Mammary epithelial cell (primary cell): ENCODE measurements at regions of chr11 and their contacts with region 1.

Region 1: DNA sequence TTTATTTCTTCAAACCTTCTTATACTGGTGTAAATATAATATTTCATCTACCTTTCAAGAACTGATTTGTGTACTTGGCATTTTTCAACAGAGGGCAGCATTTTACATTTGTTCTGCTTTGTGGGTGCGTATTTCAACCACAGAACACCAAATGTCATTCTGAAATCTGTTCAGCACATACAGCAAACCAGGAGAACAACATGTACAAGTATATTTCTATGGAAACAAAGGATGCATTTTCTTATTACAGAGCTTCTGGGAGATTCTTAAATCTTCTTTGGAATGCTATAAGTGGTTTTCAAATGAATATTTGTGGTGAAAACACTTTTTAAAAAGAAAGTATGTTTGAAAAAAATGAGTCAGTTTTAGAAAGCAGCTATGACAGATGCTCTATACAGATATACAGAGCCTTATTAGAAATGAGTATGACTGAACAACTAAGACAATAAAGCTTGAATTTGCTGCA is 946.0 kb downstream of the FAM181B start:
- DNase-seq: peak; percentile 58
- H3K4me3 ChIP-seq: no peak overlapping the region
- H3K27ac ChIP-seq: no peak overlapping the region
- H3K4me1 ChIP-seq: no peaks in the 10 kb centered on the region
- H3K27me3 ChIP-seq: no peaks in the 10 kb centered on the region
- CTCF ChIP-seq: peak; percentile 31 to 53

Region 2: DNA sequence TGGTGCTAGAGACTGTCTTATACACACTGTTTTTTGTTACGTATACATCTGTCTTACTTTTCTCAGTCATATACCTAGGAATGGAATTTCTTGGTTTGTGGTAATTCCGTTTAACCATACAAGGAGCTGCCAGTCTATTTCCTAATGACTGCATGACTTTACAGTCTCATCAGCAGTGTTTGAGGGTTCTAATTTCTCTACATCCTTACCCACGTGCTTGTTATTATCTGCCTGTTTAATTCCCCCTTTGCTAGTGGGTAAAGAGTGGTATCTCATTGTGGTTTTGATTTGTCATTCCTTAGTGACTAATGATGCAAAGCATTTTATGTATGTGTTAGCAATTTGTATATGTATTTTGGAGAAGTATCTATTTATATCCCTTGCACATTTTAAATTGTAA is 61.9 kb before region 1 on chr11:
- CTCF ChIA-PET with region 1: no interaction called
- dilution Hi-C with region 1: loop called (anchors 5 kb)
- in situ Hi-C with region 1: no loop called
- intact Hi-C with region 1: no loop called
- DNase-seq: peak; percentile 19
- H3K4me3 ChIP-seq: no peak overlapping the region
- H3K27ac ChIP-seq: no peak overlapping the region
- H3K4me1 ChIP-seq: peaks cover 3% of the 10 kb centered on the region
- H3K27me3 ChIP-seq: no peaks in the 10 kb centered on the region
- CTCF ChIP-seq: no peak

Region 3: GRCh38 chr11:81744336-81745116 is 43.1 kb before region 1 on chr11:
- CTCF ChIA-PET with region 1: no interaction called
- dilution Hi-C with region 1: no loop called
- in situ Hi-C with region 1: no loop called
- intact Hi-C with region 1: no loop called
- DNase-seq: no peak
- H3K4me3 ChIP-seq: no peak overlapping the region
- H3K27ac ChIP-seq: no peak overlapping the region
- H3K4me1 ChIP-seq: no peaks in the 10 kb centered on the region
- H3K27me3 ChIP-seq: no peaks in the 10 kb centered on the region
- CTCF ChIP-seq: no peak

Region 4: DNA sequence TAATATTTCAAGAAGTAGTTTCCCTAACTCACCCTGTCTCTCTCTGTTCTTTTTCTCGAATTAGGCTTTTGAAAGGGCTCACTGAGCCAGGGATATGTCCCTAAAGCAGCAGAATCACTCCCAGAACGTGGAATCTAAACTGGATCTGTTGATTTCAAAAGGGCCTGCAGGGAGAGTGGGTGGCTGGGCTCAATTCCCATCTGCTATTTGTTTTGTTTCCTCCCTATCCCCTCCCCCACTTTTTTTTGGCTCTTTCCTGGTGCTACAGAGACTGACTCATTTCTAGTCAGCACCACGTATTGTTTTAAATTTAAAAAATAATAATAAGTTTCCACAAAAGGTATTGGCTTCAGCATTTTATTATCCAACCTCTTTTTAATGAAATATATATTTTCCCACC is 15.5 kb before region 1 on chr11:
- CTCF ChIA-PET with region 1: no interaction called
- dilution Hi-C with region 1: no loop called
- in situ Hi-C with region 1: no loop called
- intact Hi-C with region 1: no loop called
- DNase-seq: no peak
- H3K4me3 ChIP-seq: no peak overlapping the region
- H3K27ac ChIP-seq: no peak overlapping the region
- H3K4me1 ChIP-seq: no peaks in the 10 kb centered on the region
- H3K27me3 ChIP-seq: peaks cover 2% of the 10 kb centered on the region
- CTCF ChIP-seq: no peak

Region 5: DNA sequence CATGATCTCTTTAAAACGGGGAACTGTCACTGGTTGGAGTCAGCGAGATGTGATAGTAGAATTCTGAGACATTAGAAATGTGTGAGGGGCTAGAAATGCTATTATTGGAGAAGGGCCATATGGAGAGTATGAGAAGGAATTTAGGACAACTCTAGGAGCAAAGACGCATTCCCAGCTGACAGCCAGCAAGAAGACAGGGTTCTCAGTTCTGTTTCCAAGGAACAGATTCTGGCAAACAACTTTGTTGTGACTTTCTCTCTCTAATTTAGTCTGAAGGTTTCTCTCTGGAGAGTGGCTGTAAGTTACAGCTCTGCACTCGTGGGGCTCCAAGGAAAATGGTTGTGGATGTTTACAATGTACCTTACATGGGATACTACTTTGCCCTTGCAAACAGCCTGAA is 69.8 kb after region 1 on chr11:
- CTCF ChIA-PET with region 1: no interaction called
- dilution Hi-C with region 1: no loop called
- in situ Hi-C with region 1: no loop called
- intact Hi-C with region 1: loop called (anchors 10 kb)
- DNase-seq: no peak
- H3K4me3 ChIP-seq: no peak overlapping the region
- H3K27ac ChIP-seq: no peak overlapping the region
- H3K4me1 ChIP-seq: no peaks in the 10 kb centered on the region
- H3K27me3 ChIP-seq: no peaks in the 10 kb centered on the region
- CTCF ChIP-seq: no peak

Region 6: GRCh38 chr11:82038153-82038552 is 250.5 kb after region 1 on chr11:
- CTCF ChIA-PET with region 1: no interaction called
- dilution Hi-C with region 1: no loop called
- in situ Hi-C with region 1: no loop called
- intact Hi-C with region 1: loop called (anchors 1 kb)
- DNase-seq: no peak
- H3K4me3 ChIP-seq: no peak overlapping the region
- H3K27ac ChIP-seq: no peak overlapping the region
- H3K4me1 ChIP-seq: no peaks in the 10 kb centered on the region
- H3K27me3 ChIP-seq: no peaks in the 10 kb centered on the region
- CTCF ChIP-seq: peak; percentile 10 to 55

Region 7: DNA sequence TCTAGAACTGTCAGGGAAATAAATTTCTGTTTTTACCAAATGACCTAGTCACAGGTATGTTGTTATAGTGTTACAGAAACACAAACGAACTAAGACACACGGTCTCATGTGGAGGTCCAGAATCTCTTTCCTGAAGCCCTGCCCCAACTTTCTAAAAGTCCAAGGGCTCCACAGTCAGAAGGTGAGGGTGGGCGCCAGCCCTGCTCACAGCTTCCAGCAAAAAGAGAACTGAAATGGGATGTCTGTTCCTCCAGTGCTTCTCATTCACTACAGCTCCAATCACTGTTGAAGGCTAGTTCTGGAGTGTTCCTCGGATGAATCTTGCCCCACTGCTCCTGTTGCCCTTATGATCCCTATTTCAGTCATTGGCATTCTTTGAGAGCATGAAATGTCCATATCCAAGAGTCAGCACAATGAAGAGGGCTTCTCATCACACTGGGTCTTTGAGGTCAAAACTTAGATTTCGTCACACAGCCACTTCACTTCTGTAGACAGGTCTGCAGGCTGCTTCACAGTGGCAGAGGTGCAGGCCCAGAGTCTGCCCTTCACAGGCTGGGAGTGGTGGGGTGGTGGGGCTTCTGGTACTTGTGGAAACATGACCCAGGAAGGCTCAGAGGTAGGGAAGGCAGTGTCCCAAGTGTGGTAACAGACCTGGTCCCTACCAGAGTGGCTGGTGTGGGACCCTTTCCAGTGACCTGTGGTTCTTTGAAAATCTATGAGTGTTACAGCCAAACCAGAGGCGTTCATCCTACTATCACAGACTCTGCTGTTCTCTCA is 911.1 kb after region 1 on chr11:
- CTCF ChIA-PET with region 1: no interaction called
- dilution Hi-C with region 1: no loop called
- in situ Hi-C with region 1: no loop called
- intact Hi-C with region 1: loop called (anchors 5 kb)
- DNase-seq: no peak
- H3K4me3 ChIP-seq: no peak overlapping the region
- H3K27ac ChIP-seq: no peak overlapping the region
- H3K4me1 ChIP-seq: no peaks in the 10 kb centered on the region
- H3K27me3 ChIP-seq: no peaks in the 10 kb centered on the region
- CTCF ChIP-seq: no peak